ENCODE measurements at regions of chr19 and their contacts with region 1.

Region 1: GRCh38 chr19:41541990-41542584 is 33.9 kb upstream of the CEACAM21 start:
- DNase-seq: peak; percentile 93
- H3K4me3 Mint-ChIP-seq: peak overlapping the region; percentile 41
- H3K27ac Mint-ChIP-seq: peak overlapping the region; percentile 82
- H3K4me1 Mint-ChIP-seq: peaks cover 65% of the 10 kb centered on the region
- H3K27me3 Mint-ChIP-seq: no peaks in the 10 kb centered on the region

Region 2: DNA sequence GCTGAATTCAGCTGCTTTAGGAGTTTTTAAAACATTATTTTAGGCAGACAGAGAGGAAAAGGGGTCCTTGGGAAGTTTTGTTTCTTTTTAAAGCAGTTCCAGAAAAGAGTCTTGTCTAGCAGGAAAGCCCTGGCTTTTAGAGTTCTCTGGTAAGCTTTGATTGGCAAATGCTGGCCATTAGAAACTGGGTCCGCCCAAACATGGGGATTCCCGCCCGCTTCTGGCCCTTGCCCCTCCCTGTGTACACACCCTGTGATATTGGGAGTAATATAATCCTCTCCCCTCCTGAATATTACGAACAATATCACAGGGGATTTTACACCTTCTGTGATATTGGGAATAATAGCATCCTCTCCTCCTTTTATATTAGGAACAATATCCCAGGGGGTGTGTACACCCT is 40.2 kb before region 1 on chr19:
- CTCF ChIA-PET with region 1: no interaction called
- intact Hi-C with region 1: no loop called
- DNase-seq: no peak
- H3K4me3 Mint-ChIP-seq: no peak overlapping the region
- H3K27ac Mint-ChIP-seq: no peak overlapping the region
- H3K4me1 Mint-ChIP-seq: peaks cover 3% of the 10 kb centered on the region
- H3K27me3 Mint-ChIP-seq: peaks cover 11% of the 10 kb centered on the region

Region 3: GRCh38 chr19:41521931-41522555 is 20.0 kb before region 1 on chr19:
- CTCF ChIA-PET with region 1: no interaction called
- intact Hi-C with region 1: loop called (anchors 1 kb)
- DNase-seq: peak; percentile 39
- H3K4me3 Mint-ChIP-seq: peak overlapping the region; percentile 76
- H3K27ac Mint-ChIP-seq: peak overlapping the region; percentile 81
- H3K4me1 Mint-ChIP-seq: peaks cover 24% of the 10 kb centered on the region
- H3K27me3 Mint-ChIP-seq: no peaks in the 10 kb centered on the region

Region 4: GRCh38 chr19:41531438-41532311 is 10.4 kb before region 1 on chr19:
- CTCF ChIA-PET with region 1: interaction called, 8 read pairs
- intact Hi-C with region 1: loop called (anchors 1 kb)
- DNase-seq: peak; percentile 95
- H3K4me3 Mint-ChIP-seq: peak overlapping the region; percentile 78
- H3K27ac Mint-ChIP-seq: peak overlapping the region; percentile 90
- H3K4me1 Mint-ChIP-seq: peaks cover 52% of the 10 kb centered on the region
- H3K27me3 Mint-ChIP-seq: no peaks in the 10 kb centered on the region

Region 5: DNA sequence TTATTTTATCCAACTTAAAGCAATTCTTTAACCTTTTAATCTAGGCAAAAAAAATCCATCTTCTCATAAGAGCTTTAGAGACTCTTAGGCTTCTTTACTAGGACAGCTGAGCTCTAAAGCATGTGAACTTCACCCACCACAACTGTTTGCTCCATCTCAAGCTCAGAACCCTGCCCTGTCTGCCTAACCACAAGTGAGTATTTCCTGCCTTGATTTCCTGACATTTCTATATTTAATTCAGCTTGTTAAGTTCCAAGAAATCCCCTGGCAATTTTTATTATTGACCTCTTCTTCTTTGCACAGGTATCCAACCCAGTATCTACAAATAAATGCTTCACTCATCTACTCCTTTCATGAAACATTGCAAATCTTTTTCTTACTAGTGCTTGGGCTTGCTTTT is 12.8 kb after region 1 on chr19:
- CTCF ChIA-PET with region 1: interaction called, 10 read pairs
- intact Hi-C with region 1: loop called (anchors 1 kb)
- DNase-seq: peak; percentile 60
- H3K4me3 Mint-ChIP-seq: peak overlapping the region; percentile 37
- H3K27ac Mint-ChIP-seq: peak overlapping the region; percentile 100
- H3K4me1 Mint-ChIP-seq: peaks cover 66% of the 10 kb centered on the region
- H3K27me3 Mint-ChIP-seq: no peaks in the 10 kb centered on the region

Region 6: GRCh38 chr19:41734617-41735016 is 192.5 kb after region 1 on chr19:
- CTCF ChIA-PET with region 1: no interaction called
- intact Hi-C with region 1: no loop called
- DNase-seq: no peak
- H3K4me3 Mint-ChIP-seq: no peak overlapping the region
- H3K27ac Mint-ChIP-seq: no peak overlapping the region
- H3K4me1 Mint-ChIP-seq: peaks cover 6% of the 10 kb centered on the region
- H3K27me3 Mint-ChIP-seq: peaks cover 27% of the 10 kb centered on the region

Measured in activated naive CD4-positive, alpha-beta T cell treated with anti-CD3 and anti-CD28 coated beads for 36 hours (primary cell).